PC-9 (cell line): ENCODE measurements at regions of chr10 and their contacts with region 1.

Region 1: DNA sequence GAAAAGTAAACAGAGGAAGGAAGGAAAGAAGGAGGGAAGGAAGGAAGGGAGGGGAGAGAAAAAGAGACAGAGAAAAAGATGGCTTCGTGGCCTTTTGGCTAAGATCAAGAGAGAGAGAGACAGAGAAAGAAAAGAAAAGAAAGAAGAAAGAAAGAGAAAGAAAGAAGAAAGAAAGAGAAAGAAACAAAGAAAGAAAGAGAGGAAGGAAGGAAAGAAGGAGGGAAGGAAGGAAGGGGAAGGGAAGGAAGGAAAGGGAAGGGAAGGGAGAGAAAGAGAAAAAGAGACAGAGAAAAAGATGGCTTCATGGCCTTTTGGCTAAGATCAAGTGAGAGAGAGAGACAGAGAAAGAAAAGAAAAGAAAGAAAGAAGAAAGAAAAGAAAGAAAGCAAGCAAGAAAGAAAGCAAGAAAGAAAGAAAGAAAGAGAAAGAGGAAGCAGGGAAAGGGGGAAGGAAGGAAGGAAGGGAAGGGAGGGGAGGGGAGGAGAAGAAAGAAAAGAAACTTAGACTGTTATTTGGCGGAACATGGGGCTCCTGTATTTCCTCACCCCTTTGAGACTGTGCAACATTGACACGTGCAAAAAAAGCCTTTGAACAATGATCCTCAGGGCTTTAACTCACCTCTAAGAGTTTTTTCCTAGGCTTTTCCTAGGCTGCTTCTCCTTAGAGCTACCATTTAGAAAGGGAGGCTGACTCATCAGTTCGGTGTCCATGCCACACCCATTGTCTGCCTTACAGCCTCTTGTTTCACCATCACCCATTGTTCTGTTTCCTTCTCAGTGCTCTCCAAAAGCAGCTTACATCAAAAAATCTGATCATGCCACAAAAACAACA is 91.2 kb downstream of the PRLHR start:
- DNase-seq: peak; percentile 48 to 91
- H3K4me3 ChIP-seq: no peak overlapping the region
- H3K27ac ChIP-seq: peak overlapping the region; percentile 46
- H3K4me1 ChIP-seq: peaks cover 48% of the 10 kb centered on the region
- H3K27me3 ChIP-seq: no peaks in the 10 kb centered on the region
- CTCF ChIP-seq: no peak

Region 2: GRCh38 chr10:118362103-118362502 is 142.2 kb before region 1 on chr10:
- CTCF ChIA-PET with region 1: no interaction called
- POLR2A ChIA-PET with region 1: no interaction called
- intact Hi-C with region 1: no loop called
- DNase-seq: no peak
- H3K4me3 ChIP-seq: no peak overlapping the region
- H3K27ac ChIP-seq: no peak overlapping the region
- H3K4me1 ChIP-seq: no peaks in the 10 kb centered on the region
- H3K27me3 ChIP-seq: no peaks in the 10 kb centered on the region
- CTCF ChIP-seq: no peak

Region 3: GRCh38 chr10:118488710-118489497 is 15.4 kb before region 1 on chr10:
- CTCF ChIA-PET with region 1: no interaction called
- POLR2A ChIA-PET with region 1: no interaction called
- intact Hi-C with region 1: no loop called
- DNase-seq: no peak
- H3K4me3 ChIP-seq: no peak overlapping the region
- H3K27ac ChIP-seq: no peak overlapping the region
- H3K4me1 ChIP-seq: no peaks in the 10 kb centered on the region
- H3K27me3 ChIP-seq: no peaks in the 10 kb centered on the region
- CTCF ChIP-seq: no peak

Region 4: DNA sequence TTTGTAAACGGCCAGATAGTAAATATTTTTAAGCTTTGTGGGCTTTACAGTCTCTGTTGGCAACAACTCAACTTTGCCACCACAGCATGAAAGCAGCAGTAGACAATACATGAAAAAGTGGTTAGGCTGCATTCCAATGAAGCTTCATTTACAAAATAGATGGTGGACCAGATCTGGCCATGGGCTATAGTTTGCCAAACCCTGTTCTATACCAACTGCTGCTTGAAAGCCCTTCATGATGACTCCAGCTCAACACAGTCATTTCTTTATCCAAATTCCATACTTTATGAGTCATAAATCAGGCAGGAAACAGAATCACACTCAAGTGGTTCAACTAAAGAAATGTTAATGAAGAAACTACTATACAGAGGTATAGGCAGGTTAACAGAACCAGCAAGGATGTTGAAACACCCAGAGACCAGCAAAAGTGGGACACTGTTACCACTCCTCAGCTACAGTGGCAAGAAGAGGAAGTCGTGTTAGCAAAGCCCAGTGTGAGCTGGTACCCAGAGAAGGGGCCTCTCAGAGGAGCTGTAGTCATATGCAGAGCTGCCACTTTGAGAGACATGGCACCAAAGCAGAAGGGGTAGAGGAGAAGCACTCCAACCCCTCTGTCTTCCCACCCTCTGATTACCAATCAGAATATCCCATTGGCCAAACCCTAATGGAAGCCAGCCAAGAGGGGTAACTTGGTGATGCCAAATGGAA is 18.7 kb after region 1 on chr10:
- CTCF ChIA-PET with region 1: no interaction called
- POLR2A ChIA-PET with region 1: no interaction called
- intact Hi-C with region 1: loop called (anchors 1 kb)
- DNase-seq: peak; percentile 59 to 97
- H3K4me3 ChIP-seq: no peak overlapping the region
- H3K27ac ChIP-seq: peak overlapping the region; percentile 81
- H3K4me1 ChIP-seq: peaks cover 27% of the 10 kb centered on the region
- H3K27me3 ChIP-seq: no peaks in the 10 kb centered on the region
- CTCF ChIP-seq: no peak

Region 5: DNA sequence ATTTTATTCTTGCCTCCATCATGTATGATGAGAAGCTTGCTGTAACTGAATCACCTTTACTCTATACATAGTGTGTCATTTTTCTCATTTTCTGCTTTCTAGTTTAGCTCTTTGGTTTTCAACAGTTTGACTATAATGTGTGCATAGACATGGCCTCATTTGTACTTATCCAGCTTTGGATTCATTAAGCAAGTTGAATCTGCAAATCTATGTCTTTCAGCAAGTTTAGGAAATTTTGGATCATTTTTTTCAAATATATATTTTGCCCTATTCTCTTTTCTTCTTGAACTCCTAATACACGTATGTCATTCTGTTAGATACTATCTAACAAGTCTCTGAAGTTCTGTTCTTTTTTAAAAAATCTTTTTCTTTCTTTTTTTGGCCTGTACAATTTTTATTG is 33.4 kb after region 1 on chr10:
- CTCF ChIA-PET with region 1: no interaction called
- POLR2A ChIA-PET with region 1: no interaction called
- intact Hi-C with region 1: loop called (anchors 5 kb)
- DNase-seq: no peak
- H3K4me3 ChIP-seq: no peak overlapping the region
- H3K27ac ChIP-seq: no peak overlapping the region
- H3K4me1 ChIP-seq: no peaks in the 10 kb centered on the region
- H3K27me3 ChIP-seq: no peaks in the 10 kb centered on the region
- CTCF ChIP-seq: no peak